WTC11 (cell line): ENCODE measurements at regions of chr4 and their contacts with region 1.

Region 1: GRCh38 chr4:134320048-134320447 is 118.5 kb upstream of the PABPC4L start:
- DNase-seq: no peak
- ATAC-seq: no peak
- H3K4me3 Mint-ChIP-seq: no peak overlapping the region
- H3K27ac Mint-ChIP-seq: no peak overlapping the region
- H3K4me1 Mint-ChIP-seq: no peaks in the 10 kb centered on the region
- H3K27me3 Mint-ChIP-seq: no peaks in the 10 kb centered on the region
- CTCF ChIP-seq: no peak

Region 2: DNA sequence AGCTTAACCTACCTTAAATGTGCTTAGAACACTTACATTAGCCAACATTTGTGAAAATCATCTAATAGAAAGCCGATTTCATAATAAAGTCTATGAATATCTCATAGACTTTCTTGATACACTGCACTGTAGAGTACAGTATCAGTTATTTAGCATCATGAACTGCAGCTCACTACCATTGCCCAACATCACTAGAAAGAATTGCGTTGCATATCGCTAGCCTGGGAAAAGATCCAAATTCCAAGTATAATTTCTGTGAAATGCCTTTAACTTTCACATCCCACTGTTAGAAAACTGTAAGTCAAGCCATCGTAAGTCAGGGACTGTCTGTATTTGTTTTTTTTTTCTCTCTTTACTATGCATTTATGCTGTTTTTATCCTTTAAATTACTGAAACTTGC is 800.1 kb after region 1 on chr4:
- CTCF ChIA-PET with region 1: no interaction called
- POLR2A ChIA-PET with region 1: interaction called, 14 read pairs
- DNase-seq: no peak
- ATAC-seq: no peak
- H3K4me3 Mint-ChIP-seq: no peak overlapping the region
- H3K27ac Mint-ChIP-seq: no peak overlapping the region
- H3K4me1 Mint-ChIP-seq: peaks cover 17% of the 10 kb centered on the region
- H3K27me3 Mint-ChIP-seq: no peaks in the 10 kb centered on the region
- CTCF ChIP-seq: no peak